ENCODE measurements at regions of chr17 and their contacts with region 1.

Region 1: GRCh38 chr17:5031365-5032082 is 3.7 kb downstream of the SLC52A1 start:
- DNase-seq: peak; percentile 78
- H3K4me3 Mint-ChIP-seq: peak overlapping the region; percentile 60
- H3K27ac Mint-ChIP-seq: no peak overlapping the region
- H3K4me1 Mint-ChIP-seq: peaks cover 5% of the 10 kb centered on the region
- H3K27me3 Mint-ChIP-seq: no peaks in the 10 kb centered on the region
- CTCF ChIP-seq: peak; percentile 58

Region 2: DNA sequence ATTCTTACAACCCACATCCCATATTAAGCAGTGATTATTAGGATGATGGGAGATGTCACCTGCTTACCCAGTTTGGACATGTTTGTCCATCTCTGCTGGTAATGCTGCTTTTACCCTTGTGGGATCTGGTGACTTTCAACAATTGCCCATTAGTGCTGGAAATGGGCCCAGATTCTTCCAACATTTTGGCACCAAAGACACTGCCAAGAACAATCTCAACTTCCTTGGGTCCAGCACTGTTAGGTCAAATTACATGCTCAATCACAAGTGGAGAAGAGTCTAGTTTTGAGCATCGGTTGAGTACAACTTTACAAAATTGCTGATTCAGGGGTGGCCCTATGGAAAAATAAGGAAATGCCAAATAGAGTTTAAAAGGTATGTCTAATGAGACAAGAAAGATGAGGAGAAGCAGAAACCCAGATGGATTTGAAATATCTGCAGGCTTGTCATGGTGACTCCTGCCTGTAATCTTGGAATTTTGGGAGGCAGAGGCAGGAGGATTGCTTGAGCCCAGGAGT is 33.8 kb after region 1 on chr17:
- CTCF ChIA-PET with region 1: interaction called, 16 read pairs
- POLR2A ChIA-PET with region 1: interaction called, 3 read pairs
- intact Hi-C with region 1: loop called (anchors 1 kb)
- DNase-seq: peak; percentile 28
- H3K4me3 Mint-ChIP-seq: no peak overlapping the region
- H3K27ac Mint-ChIP-seq: no peak overlapping the region
- H3K4me1 Mint-ChIP-seq: no peaks in the 10 kb centered on the region
- H3K27me3 Mint-ChIP-seq: peaks cover 10% of the 10 kb centered on the region
- CTCF ChIP-seq: no peak

Region 3: DNA sequence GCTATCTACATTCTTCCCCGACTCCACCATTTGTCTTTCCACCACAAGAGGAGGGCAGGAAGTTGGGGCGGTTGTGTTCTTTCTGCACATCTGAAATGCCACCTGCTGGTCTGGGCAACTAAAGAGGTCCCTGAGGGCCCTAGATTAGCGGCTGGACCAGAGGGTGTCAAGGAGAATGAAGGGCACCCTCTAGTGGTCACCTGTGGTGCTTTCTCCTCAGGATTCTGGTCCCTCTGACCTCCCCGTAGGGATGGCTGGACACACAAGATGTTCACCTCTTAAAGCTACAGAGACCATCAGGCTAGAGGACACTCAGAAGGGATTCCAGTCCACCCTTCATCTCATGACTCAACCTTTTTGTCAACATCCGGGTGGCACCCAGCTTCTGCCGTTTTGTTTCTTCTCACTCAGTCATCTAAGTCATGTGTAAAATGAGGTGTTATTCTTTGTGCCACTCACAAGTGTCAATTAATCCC is 206.1 kb after region 1 on chr17:
- CTCF ChIA-PET with region 1: no interaction called
- POLR2A ChIA-PET with region 1: no interaction called
- intact Hi-C with region 1: loop called (anchors 5 kb)
- DNase-seq: peak; percentile 83
- H3K4me3 Mint-ChIP-seq: no peak overlapping the region
- H3K27ac Mint-ChIP-seq: no peak overlapping the region
- H3K4me1 Mint-ChIP-seq: no peaks in the 10 kb centered on the region
- H3K27me3 Mint-ChIP-seq: no peaks in the 10 kb centered on the region
- CTCF ChIP-seq: peak; percentile 54